Mammary epithelial cell (primary cell): ENCODE measurements at regions of chr2 and their contacts with region 1.

Region 1: DNA sequence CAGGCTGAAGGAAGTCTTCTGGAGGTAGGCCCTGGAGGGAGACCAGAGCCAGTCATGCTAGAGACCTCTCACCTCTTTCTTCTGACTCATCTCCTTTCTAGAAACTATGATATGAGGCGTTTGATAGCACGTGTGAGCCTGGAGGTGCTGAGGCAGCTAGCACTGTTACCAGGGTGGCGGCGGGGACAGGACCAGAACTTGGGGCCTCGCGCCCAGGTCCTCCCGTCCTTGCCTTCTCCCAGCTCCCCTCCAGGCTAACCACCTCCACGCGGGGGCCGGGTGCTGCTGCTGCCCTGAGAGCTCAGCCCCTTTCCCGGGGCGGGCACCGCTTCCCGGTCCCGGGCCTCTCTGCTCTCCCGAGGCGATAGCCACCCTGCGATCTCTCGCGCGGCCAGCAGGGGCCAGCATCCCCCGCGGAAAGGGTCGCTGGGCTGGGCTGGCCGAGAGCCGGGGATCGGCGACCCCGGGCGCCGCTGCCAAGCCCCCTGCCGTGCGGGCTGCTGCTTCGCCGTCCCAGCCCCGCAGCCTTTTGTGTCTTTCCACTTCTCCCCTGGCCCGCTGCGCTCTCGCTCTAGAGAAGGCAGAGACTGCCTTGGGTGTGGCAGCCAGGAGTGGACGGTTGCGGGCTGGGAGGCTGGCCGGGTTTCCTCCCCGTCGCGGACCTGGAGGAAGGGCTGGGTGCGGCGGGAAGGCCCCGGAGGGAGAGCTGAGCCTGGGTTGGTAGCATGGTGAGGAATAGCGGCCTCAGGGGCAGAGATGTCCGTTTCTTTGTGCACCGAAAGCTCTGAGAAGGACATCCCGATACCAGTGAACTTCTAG is 49.1 kb downstream of the TMEM17 start:
- DNase-seq: peak; percentile 74
- H3K4me3 ChIP-seq: peak overlapping the region; percentile 41 to 72 (median 52)
- H3K27ac ChIP-seq: peak overlapping the region; percentile 70
- H3K4me1 ChIP-seq: peaks cover 32% of the 10 kb centered on the region
- H3K27me3 ChIP-seq: no peaks in the 10 kb centered on the region
- CTCF ChIP-seq: peak; percentile 72 to 92

Region 2: GRCh38 chr2:62398356-62398755 is 58.6 kb before region 1 on chr2:
- CTCF ChIA-PET with region 1: no interaction called
- dilution Hi-C with region 1: no loop called
- in situ Hi-C with region 1: no loop called
- intact Hi-C with region 1: no loop called
- DNase-seq: no peak
- H3K4me3 ChIP-seq: no peak overlapping the region
- H3K27ac ChIP-seq: no peak overlapping the region
- H3K4me1 ChIP-seq: no peaks in the 10 kb centered on the region
- H3K27me3 ChIP-seq: no peaks in the 10 kb centered on the region
- CTCF ChIP-seq: no peak

Region 3: DNA sequence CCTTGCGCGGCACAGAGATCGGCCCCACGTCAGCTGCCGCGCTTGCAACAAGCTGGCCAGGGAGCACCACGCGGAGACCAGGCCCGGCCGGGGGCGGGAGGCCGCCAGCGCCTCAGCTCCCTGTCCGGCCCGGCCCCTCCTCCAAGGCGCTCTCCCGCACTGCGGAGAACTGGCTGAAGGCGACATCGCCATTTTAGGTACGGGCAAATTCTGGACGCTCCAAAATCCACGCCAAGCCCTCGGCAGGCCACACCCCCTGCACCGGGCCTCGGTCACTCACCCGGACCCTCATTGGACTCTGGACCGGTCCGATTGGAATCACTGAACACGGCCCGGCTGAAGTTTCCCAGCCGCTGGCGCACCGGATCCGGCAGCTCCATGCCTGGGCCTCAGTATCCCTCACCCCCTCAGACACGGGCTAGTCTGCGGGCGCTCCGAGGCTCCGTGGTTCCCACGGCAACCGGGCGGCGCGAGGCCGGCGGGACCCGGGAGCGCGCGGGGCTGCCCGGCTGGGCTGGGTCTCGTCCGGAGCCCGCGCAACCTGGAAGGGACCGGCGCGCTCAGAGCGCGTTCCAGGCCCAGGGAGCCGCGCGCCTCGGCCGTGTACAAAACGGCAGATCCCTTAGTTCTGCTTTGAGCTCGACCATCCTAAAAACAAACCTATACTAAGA is 49.0 kb after region 1 on chr2 and contains the start of gene TMEM17:
- CTCF ChIA-PET with region 1: interaction called, 3 read pairs
- dilution Hi-C with region 1: no loop called
- in situ Hi-C with region 1: no loop called
- intact Hi-C with region 1: loop called (anchors 5 kb)
- DNase-seq: peak; percentile 86
- H3K4me3 ChIP-seq: peak within 1 kb of the TSS; percentile 62 to 83 (median 63)
- H3K27ac ChIP-seq: peak within 1 kb of the TSS; percentile 90
- H3K4me1 ChIP-seq: peaks cover 20% of the 10 kb centered on the region
- H3K27me3 ChIP-seq: no peaks in the 10 kb centered on the region
- CTCF ChIP-seq: no peak
- total RNA-seq, gene TMEM17: 3.0 to 3.9 TPM

Region 4: DNA sequence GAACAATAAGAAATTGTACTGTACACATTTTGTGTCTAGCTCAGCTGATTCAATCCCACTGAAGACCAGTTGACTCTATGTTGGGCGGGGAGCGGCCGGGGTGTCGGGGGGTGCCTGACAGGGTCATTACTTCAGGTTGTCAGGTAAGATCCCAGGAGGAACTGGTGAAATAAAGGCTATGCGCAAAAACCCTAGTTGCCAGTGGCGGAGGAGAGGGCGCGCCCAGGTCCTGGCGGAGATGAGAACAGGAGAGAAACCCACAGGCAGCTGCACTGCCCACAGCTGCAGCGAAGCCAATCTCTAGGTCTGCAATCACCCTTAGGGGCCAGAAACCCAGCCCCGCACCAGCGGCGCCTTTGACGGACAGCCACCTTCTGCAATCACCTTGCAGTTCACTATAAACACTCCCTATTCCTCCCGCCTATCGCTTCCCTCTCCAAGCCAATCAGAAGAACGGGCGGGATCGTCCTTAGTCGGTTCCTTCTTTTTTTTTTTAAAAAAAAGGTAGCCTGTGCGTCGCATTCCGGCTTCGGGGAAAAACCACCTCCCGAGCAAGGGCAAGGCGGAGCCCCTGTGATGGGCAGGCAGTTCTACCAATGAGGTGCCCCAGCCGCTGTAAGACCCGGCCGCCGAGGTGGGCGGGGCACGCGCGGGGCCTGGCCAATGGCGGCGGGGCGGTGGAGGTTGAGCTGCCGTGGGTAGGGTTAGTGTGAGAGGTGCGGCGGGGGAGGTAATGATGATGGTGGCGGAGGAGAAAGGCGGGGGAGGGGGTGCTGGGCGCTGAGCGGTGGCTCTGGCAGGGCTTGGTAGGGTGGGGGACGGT is 248.3 kb after region 1 on chr2 and contains the start of gene EHBP1:
- CTCF ChIA-PET with region 1: no interaction called
- dilution Hi-C with region 1: no loop called
- in situ Hi-C with region 1: no loop called
- intact Hi-C with region 1: loop called (anchors 1 kb)
- DNase-seq: peak; percentile 100
- H3K4me3 ChIP-seq: peak within 1 kb of the TSS; percentile 79 to 91 (median 90)
- H3K27ac ChIP-seq: peak within 1 kb of the TSS; percentile 91
- H3K4me1 ChIP-seq: peaks cover 19% of the 10 kb centered on the region
- H3K27me3 ChIP-seq: no peaks in the 10 kb centered on the region
- CTCF ChIP-seq: no peak
- total RNA-seq, gene EHBP1: 46.0 to 101 TPM

Region 5: DNA sequence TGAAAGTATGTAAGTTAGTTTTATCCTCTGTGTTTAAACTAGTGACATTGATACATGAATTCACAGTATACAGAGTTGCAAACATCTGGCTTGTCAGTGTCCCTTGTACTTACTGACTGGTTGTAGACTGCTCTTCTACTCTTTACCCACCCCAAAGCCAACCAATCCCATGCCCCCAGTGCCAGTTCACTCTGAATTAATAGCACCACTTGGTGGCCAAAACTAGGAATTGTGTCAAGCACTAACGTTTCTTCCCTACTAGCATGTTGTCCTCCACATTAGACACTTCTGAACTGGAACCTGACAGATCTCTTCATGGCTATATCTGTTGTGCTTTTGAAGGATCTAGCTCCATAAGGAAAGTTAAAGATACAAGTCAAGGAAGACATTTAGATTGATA is 566.5 kb after region 1 on chr2:
- CTCF ChIA-PET with region 1: no interaction called
- dilution Hi-C with region 1: no loop called
- in situ Hi-C with region 1: no loop called
- intact Hi-C with region 1: loop called (anchors 10 kb)
- DNase-seq: peak; percentile 25
- H3K4me3 ChIP-seq: no peak overlapping the region
- H3K27ac ChIP-seq: no peak overlapping the region
- H3K4me1 ChIP-seq: no peaks in the 10 kb centered on the region
- H3K27me3 ChIP-seq: no peaks in the 10 kb centered on the region
- CTCF ChIP-seq: peak; percentile 34 to 40

Region 6: GRCh38 chr2:63544017-63544627 is 1087.2 kb after region 1 on chr2:
- CTCF ChIA-PET with region 1: no interaction called
- dilution Hi-C with region 1: no loop called
- in situ Hi-C with region 1: no loop called
- intact Hi-C with region 1: loop called (anchors 10 kb)
- DNase-seq: no peak
- H3K4me3 ChIP-seq: no peak overlapping the region
- H3K27ac ChIP-seq: no peak overlapping the region
- H3K4me1 ChIP-seq: peaks cover 5% of the 10 kb centered on the region
- H3K27me3 ChIP-seq: no peaks in the 10 kb centered on the region
- CTCF ChIP-seq: peak; percentile 45 to 59